Stomach (tissue), 19 donors: ENCODE measurements at regions of chr7 and their contacts with region 1.

Region 1: DNA sequence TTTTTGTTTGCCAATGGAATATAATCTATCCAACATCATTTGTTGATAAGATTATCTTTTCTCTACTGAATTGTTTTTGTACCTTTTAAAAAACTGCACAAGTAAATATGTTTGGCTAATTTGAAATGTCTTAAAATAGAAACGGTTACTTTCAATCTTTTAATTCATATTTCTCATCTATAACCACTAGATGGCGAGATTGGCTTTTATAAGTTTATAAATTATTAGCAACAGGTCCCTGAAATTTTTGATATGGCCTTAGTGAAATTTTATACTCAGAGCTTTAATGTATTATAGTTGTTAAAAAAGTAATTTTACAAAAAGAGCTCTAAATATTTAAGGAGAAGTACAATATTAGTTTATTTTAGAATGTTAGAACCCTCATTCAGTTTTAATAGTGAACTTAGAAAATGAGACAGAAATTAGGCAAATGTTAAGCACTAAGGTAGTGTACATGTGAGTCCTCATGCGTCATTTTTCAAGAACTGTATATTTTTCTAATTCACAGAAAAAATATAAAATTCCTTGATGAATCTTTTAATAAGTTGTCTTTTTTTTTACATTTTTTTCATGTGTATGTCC is 592.5 kb downstream of the ARL4A start:
- DNase-seq: peak in 1 of 2 donors; percentile 36
- H3K4me3 ChIP-seq: no peak overlapping the region
- H3K27ac ChIP-seq: no peak overlapping the region
- H3K4me1 ChIP-seq: no peaks in the 10 kb centered on the region
- H3K27me3 ChIP-seq: no peaks in the 10 kb centered on the region
- CTCF ChIP-seq: peak in 2 of 7 experiments; percentile 43 to 47
- EP300 ChIP-seq: no peak
- POLR2A ChIP-seq: no peak

Region 2: DNA sequence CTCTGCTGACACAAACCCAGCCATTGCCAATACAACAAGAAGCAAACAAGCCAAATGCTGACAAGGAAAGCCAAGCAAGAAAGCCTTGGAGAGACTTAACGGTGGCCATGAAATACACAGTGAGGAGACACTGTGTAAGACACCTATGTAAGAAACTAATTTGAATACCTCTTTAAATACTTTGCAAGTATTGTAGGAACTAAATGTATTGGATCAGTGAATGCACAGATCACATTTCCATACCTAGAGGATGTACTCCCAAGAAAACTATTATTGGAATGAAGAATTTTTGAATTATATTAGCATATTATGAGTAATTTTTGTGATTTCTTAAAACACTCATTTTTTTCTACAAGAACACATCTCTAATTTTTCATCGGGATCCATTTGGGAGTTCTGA is 675.5 kb after region 1 on chr7:
- intact Hi-C with region 1: no loop called
- DNase-seq: no peak
- H3K4me3 ChIP-seq: no peak overlapping the region
- H3K27ac ChIP-seq: no peak overlapping the region
- H3K4me1 ChIP-seq: no peaks in the 10 kb centered on the region
- H3K27me3 ChIP-seq: no peaks in the 10 kb centered on the region
- CTCF ChIP-seq: no peak
- EP300 ChIP-seq: no peak
- POLR2A ChIP-seq: no peak

Region 3: DNA sequence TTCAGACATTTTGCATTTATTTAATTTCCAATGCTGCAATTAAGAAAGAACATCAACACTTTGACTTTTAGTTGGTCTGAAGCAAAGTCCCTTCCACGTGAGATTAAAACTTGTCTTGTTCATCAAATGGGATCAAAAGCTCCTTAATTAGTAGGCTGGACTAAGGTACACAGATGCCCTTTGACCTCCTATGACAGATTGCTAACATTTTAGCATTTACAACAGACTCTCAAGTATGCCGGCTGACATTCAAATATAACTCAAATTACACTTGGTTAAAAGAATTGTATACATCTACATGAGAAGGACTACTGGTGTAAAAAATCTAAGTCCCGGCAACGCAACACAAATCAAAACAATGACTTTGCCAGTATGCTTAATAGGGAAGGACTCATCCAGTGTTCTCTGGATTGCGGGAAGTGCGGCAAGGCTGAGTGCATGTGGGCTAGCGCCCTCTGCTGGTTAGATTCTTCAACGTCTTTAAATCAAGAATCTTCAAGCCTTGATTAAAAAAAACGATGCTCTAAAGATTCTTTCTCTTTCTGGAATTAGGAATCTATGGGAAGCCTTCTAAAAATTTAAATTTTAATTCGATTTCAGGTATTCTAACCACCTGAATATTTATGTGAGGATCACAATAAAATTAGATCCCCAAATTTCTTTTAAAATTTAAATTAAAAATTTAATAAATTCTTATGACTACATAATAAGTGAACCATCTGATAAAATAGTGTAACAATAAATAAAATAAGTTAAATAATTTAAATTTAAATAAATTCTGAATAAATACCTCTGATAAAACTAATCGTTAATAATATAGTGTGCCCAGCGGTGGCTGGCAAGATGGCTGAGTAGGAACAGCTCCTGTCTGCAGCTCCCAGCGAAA is 1177.9 kb after region 1 on chr7:
- intact Hi-C with region 1: loop called (anchors 5 kb)
- DNase-seq: peak; percentile 76 to 92
- H3K4me3 ChIP-seq: no peak overlapping the region
- H3K27ac ChIP-seq: no peak overlapping the region
- H3K4me1 ChIP-seq: peaks cover 0 to 7% (median 3%) of the 10 kb centered on the region in 4 donors
- H3K27me3 ChIP-seq: no peaks in the 10 kb centered on the region
- CTCF ChIP-seq: peak in 4 of 7 experiments; percentile 38 to 90 (median 70)
- EP300 ChIP-seq: no peak
- POLR2A ChIP-seq: no peak

Region 4: GRCh38 chr7:14691597-14692203 is 1411.8 kb after region 1 on chr7:
- intact Hi-C with region 1: loop called (anchors 10 kb)
- DNase-seq: peak; percentile 40 to 69
- H3K4me3 ChIP-seq: no peak overlapping the region
- H3K27ac ChIP-seq: no peak overlapping the region
- H3K4me1 ChIP-seq: peaks cover 0 to 14% (median 2%) of the 10 kb centered on the region in 4 donors
- H3K27me3 ChIP-seq: no peaks in the 10 kb centered on the region
- CTCF ChIP-seq: peak in 5 of 7 experiments; percentile 51 to 82 (median 69)
- EP300 ChIP-seq: no peak
- POLR2A ChIP-seq: no peak